ENCODE measurements at regions of chr1 and their contacts with region 1.

Region 1: GRCh38 chr1:23908493-23909341 is 4.4 kb downstream of the CNR2 start:
- DNase-seq: peak; percentile 82
- ATAC-seq: peak; percentile 55
- H3K4me3 ChIP-seq: peak overlapping the region; percentile 66
- H3K27ac ChIP-seq: peak overlapping the region; percentile 98
- H3K4me1 ChIP-seq: peaks cover 62% of the 10 kb centered on the region
- H3K27me3 ChIP-seq: no peaks in the 10 kb centered on the region
- CTCF ChIP-seq: no peak
- EP300 ChIP-seq: no peak; a peak in 1 of 4 replicates
- POLR2A ChIP-seq: peak; percentile 69; the same call in 1 of the 2 replicates
- RAD21 ChIP-seq: no peak

Region 2: GRCh38 chr1:23777979-23778814 is 130.5 kb before region 1 on chr1 and contains the start of gene PITHD1:
- CTCF ChIA-PET with region 1: interaction called, 4 read pairs
- POLR2A ChIA-PET with region 1: interaction called, 7 read pairs
- RAD21 ChIA-PET with region 1: interaction called, 11 read pairs
- SMC1A ChIA-PET with region 1: interaction called, 4 read pairs
- in situ Hi-C with region 1: no loop called
- intact Hi-C with region 1: no loop called
- DNase-seq: peak; percentile 45
- ATAC-seq: peak; percentile 96
- H3K4me3 ChIP-seq: peak within 1 kb of the TSS; percentile 99
- H3K27ac ChIP-seq: peak within 1 kb of the TSS; percentile 82
- H3K4me1 ChIP-seq: peaks cover 10% of the 10 kb centered on the region; the same call in 1 of the 2 replicates
- H3K27me3 ChIP-seq: no peaks in the 10 kb centered on the region
- CTCF ChIP-seq: no peak
- EP300 ChIP-seq: no peak
- POLR2A ChIP-seq: peak; percentile 98
- RAD21 ChIP-seq: no peak
- polyA plus RNA-seq, gene PITHD1: 23.7 to 43.3 TPM

Region 3: GRCh38 chr1:23867953-23868556 is 40.7 kb before region 1 on chr1 and contains the start of gene FUCA1:
- CTCF ChIA-PET with region 1: interaction called, 8 read pairs
- POLR2A ChIA-PET with region 1: interaction called, 8 read pairs
- RAD21 ChIA-PET with region 1: interaction called, 9 read pairs
- SMC1A ChIA-PET with region 1: interaction called, 10 read pairs
- in situ Hi-C with region 1: no loop called
- intact Hi-C with region 1: loop called (anchors 2 kb)
- DNase-seq: peak; percentile 72
- ATAC-seq: peak; percentile 92
- H3K4me3 ChIP-seq: peak within 1 kb of the TSS; percentile 77
- H3K27ac ChIP-seq: peak within 1 kb of the TSS; percentile 63
- H3K4me1 ChIP-seq: peaks cover 10% of the 10 kb centered on the region
- H3K27me3 ChIP-seq: no peaks in the 10 kb centered on the region
- CTCF ChIP-seq: peak; percentile 94 to 96 (median 96)
- EP300 ChIP-seq: no peak
- POLR2A ChIP-seq: peak; percentile 91
- RAD21 ChIP-seq: peak; percentile 68
- polyA plus RNA-seq, gene FUCA1: 33.3 to 41.8 TPM

Region 4: DNA sequence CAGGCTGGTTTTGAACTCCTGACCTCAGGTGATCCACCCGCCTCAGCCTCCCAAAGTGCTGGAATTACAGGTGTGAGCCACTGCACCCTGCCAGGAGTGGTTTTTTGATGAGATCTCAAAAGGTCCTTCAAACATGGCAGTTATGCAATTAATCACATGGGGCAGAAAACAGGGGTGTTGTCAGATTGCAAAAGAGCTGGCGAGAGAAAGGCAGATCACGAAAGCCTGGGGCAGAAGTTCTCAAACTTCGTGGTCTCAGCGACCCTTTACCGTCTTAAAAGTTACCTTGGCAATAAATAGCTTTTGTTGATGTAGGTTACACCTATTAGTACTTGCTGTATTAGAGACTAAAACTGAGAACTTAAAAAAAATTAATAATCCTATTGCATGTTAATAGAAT is 11.6 kb before region 1 on chr1:
- CTCF ChIA-PET with region 1: interaction called, 4 read pairs
- POLR2A ChIA-PET with region 1: interaction called, 3 read pairs
- RAD21 ChIA-PET with region 1: interaction called, 4 read pairs
- SMC1A ChIA-PET with region 1: interaction called, 46 read pairs
- in situ Hi-C with region 1: no loop called
- intact Hi-C with region 1: no loop called
- DNase-seq: no peak
- ATAC-seq: no peak
- H3K4me3 ChIP-seq: no peak overlapping the region
- H3K27ac ChIP-seq: peak overlapping the region; percentile 80
- H3K4me1 ChIP-seq: peaks cover 38% of the 10 kb centered on the region
- H3K27me3 ChIP-seq: no peaks in the 10 kb centered on the region
- CTCF ChIP-seq: no peak
- EP300 ChIP-seq: no peak
- POLR2A ChIP-seq: no peak
- RAD21 ChIP-seq: 0 out of 2 replicates have a peak, but pooled peaks have one; percentile 5

Region 5: DNA sequence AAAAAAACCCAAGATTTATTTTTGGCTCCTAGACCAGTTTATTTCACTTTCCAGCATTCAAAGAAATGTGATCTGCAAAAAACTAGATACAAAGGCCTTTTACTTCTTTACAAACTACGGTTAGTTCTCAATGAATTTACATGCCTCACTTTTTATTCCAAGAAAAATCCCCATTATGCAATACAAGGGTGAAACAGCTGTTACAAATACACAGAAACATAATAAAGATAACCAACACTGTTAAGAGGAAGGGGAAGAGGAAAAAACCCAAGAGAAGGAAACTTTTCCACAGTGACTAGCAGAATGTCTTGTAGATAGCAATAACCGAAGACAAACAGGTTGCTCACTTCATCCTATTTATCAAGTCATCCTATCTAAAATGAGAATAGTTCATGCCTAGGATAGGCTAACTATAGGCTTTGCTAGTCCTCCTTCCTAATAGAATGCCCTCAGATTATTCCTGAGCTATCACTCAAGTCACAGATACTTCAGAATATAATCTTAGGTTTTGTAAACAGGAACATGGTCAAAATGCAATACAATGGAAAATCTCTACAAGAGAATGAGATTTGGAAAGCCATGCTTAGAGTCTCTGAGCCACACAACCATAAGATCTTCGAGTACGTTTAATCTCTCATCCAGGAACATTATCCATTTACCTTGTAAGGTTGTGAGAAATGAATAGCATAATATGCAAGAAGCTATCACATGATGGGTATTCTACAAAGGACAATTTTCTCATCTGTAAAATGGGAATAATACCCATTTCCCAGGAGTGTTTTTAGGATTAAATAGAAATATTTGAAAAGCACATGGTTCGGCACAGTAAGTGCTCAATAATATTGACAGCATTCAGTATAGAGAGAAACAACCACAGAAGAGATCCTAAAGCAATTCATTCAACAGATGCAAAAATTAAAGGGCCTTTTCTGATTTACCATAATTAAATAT is 56.3 kb after region 1 on chr1:
- CTCF ChIA-PET with region 1: no interaction called
- POLR2A ChIA-PET with region 1: interaction called, 16 read pairs
- RAD21 ChIA-PET with region 1: interaction called, 11 read pairs
- SMC1A ChIA-PET with region 1: interaction called, 5 read pairs
- in situ Hi-C with region 1: no loop called
- intact Hi-C with region 1: no loop called
- DNase-seq: no peak
- ATAC-seq: peak; percentile 7
- H3K4me3 ChIP-seq: peak overlapping the region; percentile 54
- H3K27ac ChIP-seq: peak overlapping the region; percentile 74
- H3K4me1 ChIP-seq: peaks cover 16% of the 10 kb centered on the region
- H3K27me3 ChIP-seq: no peaks in the 10 kb centered on the region
- CTCF ChIP-seq: no peak
- EP300 ChIP-seq: no peak
- POLR2A ChIP-seq: no peak
- RAD21 ChIP-seq: no peak

Region 6: DNA sequence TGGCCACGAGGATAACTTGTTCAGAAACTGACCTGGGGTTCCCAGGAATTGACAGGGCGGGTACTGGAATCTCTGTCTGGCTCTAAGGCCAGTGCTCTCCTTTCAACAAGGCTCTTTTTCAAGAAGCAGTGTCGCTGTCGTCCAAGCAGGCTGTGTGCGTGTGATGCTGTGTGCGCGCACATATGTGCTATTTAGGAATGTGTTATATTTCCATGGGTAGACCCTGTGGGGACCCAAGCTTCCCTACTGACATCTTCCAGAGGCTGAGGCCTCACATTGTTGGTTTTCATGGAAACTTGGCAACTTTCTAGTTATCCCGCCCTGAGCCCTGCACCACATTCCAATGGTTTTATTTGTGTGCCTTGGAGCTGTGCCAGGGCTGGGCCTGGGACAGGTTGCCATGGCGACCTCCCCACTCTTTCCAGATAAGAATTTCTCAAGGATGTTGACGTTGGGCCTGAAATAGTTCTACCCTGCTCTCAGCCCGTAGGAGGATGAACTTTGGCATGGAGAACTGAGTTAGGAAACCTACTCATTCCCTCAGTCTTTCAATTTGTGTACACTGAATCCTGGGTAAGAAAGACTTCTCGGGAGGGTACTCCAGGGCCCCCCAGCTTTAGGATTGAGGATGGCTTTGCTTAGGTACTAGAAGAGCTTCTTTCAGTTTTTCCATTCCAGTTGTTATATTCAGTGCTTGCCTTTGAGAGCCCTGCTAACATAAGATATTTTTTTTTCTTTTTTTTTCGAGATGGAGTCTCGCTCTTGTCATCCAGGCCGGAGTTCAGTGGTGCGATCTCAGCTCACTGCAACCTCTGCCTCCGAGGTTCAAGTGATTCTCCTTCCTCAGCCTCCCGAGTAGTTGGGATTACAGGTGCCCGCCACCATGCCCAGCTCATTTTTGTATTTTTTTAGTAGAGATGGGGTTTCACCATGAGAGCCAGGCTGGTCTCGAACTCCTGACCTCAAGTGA is 110.2 kb after region 1 on chr1:
- CTCF ChIA-PET with region 1: no interaction called
- POLR2A ChIA-PET with region 1: no interaction called
- RAD21 ChIA-PET with region 1: no interaction called
- SMC1A ChIA-PET with region 1: no interaction called
- in situ Hi-C with region 1: no loop called
- intact Hi-C with region 1: no loop called
- DNase-seq: no peak
- ATAC-seq: no peak
- H3K4me3 ChIP-seq: no peak overlapping the region
- H3K27ac ChIP-seq: no peak overlapping the region
- H3K4me1 ChIP-seq: no peaks in the 10 kb centered on the region
- H3K27me3 ChIP-seq: no peaks in the 10 kb centered on the region
- CTCF ChIP-seq: no peak
- EP300 ChIP-seq: no peak
- POLR2A ChIP-seq: no peak
- RAD21 ChIP-seq: no peak

Region 7: DNA sequence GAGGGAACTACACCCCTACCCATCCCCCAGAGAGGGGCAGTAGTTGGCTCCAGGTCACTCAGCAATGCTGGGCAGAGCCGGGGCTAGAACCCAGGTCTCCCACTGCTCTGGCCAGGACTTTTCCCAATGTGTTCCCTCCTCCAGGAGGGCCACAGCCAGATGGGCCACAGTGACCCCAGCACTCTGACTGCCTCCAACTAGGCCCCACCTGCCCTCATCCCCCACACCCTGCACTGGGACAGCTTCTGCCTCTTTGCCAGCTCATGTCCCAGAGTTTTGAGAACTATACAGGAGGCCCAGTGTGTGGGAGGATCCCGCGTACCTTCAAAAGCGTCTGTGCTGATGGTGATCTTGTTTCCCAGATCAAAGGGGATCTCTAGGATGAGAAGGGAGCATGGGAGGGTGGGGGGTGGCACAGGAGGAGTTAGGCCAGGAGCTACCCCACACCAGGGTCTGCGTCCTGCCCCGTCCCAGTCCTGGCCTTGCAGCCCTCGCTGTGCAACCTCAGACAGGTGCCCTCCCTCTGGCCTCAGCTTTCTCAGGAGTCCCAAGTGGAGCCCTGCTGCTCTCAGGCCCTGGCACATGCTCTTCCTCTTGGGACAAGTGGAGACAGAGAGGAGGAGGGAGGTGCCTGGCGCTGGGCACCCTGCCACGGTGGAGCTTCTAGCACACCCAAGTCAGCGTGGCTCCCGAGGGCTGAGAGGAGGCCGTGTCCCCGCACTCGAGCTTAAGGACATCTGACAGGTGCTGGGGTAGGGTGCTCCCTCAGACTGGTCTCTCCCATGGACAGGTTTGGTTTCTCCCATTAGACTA is 181.2 kb after region 1 on chr1:
- CTCF ChIA-PET with region 1: no interaction called
- POLR2A ChIA-PET with region 1: no interaction called
- RAD21 ChIA-PET with region 1: no interaction called
- SMC1A ChIA-PET with region 1: no interaction called
- in situ Hi-C with region 1: no loop called
- intact Hi-C with region 1: no loop called
- DNase-seq: no peak
- ATAC-seq: no peak
- H3K4me3 ChIP-seq: no peak overlapping the region
- H3K27ac ChIP-seq: no peak overlapping the region
- H3K4me1 ChIP-seq: no peaks in the 10 kb centered on the region
- H3K27me3 ChIP-seq: peaks cover 0 to 6% of the 10 kb centered on the region in 2 experiments; a peak in 2 of 4 replicates
- CTCF ChIP-seq: no peak
- EP300 ChIP-seq: no peak
- POLR2A ChIP-seq: no peak
- RAD21 ChIP-seq: no peak